ENCODE measurements at regions of chr9 and their contacts with region 1.

Region 1: DNA sequence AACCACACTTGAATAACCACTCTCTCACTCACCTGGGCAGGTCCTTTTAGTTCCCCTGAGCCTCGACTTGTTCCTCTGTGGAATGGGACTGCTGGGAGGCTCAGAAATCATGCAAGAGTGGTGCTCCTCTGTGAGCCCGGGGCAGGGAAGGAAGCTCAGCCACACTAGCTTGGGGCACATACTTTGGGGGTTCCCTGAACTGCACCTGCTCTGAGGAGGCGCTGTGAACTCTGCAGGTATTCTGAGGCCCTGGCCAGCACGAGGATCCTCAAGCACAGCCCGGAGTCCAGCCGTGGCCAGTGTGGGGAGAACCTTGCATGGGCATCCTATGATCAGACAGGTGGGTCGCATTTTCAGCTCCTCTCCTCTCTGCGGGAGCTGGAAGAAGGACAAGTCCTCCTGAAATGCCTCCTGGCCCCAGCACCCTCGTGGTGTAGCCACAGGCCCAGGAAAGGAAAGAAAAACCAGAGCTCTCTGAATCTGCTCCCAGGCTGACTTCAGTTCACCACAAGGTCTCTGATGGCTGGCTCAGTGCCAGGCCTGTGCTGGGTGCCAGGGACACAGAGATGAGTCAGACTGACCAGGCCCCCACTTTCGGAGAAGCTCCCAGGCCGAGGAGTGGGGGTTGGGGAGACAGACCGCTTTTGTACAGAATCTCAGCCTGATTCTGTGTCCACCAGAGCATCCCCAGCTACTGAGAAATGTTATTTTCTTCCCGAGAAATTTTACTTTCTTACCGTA is 11.9 kb downstream of the GLIPR2 start:
- DNase-seq: peak; percentile 85 to 91
- ATAC-seq: peak; percentile 81
- H3K4me3 ChIP-seq: no peak overlapping the region
- H3K27ac ChIP-seq: peak overlapping the region; percentile 65 to 82
- H3K4me1 ChIP-seq: peaks cover 26% of the 10 kb centered on the region
- CTCF ChIP-seq: no peak
- EP300 ChIP-seq: no peak
- POLR2A ChIP-seq: no peak
- RAD21 ChIP-seq: no peak; a peak in 2 of 5 replicates

Region 2: GRCh38 chr9:36136272-36136893 is 12.1 kb before region 1 on chr9 and contains the start of gene GLIPR2:
- CTCF ChIA-PET with region 1: interaction called, 8 read pairs
- POLR2A ChIA-PET with region 1: interaction called, 10 read pairs
- DNase-seq: peak; percentile 49 to 77
- ATAC-seq: peak; percentile 87 to 94
- H3K4me3 ChIP-seq: peak within 1 kb of the TSS; percentile 78
- H3K27ac ChIP-seq: peak within 1 kb of the TSS; percentile 79 to 93
- H3K4me1 ChIP-seq: peaks cover 14% of the 10 kb centered on the region; the same call in 1 of the 3 replicates
- CTCF ChIP-seq: no peak; the same call in 2 of the 3 replicates
- EP300 ChIP-seq: no peak
- POLR2A ChIP-seq: peak; percentile 53
- RAD21 ChIP-seq: peak in 1 of 2 experiments; percentile 5; a peak in 1 of 5 replicates
- polyA plus RNA-seq, gene GLIPR2: 6.2 and 9.0 TPM in 2 replicates

Measured in A549 (cell line).